ENCODE measurements at regions of chr1 and their contacts with region 1.

Region 1: GRCh38 chr1:226407497-226408284 is at the start of gene PARP1:
- DNase-seq: peak; percentile 98
- H3K4me3 Mint-ChIP-seq: peak within 1 kb of the TSS; percentile 78
- H3K27ac Mint-ChIP-seq: peak within 1 kb of the TSS; percentile 82
- H3K4me1 Mint-ChIP-seq: peaks cover 38% of the 10 kb centered on the region
- H3K27me3 Mint-ChIP-seq: no peaks in the 10 kb centered on the region
- CTCF ChIP-seq: peak; percentile 99
- total RNA-seq, gene PARP1: 192 and 235 TPM in 2 replicates

Region 2: DNA sequence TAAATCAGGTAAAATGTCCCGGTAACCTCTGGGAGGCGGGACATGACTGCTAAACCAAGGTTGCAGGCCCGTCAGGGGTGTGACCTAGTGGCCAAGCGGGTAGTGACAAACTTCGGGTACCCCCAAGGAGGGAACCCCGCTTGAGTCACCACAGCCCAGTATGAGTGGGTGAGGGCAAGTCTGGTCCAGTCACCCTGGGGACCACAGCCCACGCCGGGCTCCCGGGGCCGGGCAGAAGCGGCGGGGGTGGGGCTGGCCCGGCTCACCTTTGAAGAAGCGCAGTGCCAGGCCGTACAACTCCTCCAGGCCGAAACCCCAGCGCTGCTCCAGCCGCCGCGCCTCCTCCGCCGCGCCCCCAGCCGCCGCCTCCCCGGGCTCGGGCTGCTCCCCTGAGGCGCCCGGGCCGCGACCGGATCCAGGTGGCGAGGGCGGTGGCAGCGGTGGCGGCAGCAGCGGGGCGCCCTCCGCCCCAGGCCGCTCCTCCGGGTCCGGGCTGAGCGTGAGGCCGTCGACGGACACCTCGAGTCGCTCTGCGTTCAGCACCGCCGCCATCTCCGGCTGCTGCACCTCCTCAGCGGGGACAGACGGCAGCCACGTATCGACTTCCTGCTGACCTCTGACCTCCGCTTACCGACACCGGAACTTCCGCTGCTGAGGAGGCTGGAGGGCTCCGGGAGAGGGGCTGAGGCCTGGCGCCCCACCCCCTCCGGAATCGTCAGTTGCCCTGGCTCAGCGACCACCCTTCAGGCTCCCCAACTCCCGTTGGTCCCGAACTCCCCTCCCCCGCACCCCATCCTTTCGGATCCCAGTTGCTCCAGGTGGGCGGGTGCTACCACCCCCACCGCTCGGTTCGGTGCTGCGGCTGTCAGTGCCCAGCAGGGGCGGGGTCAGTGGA is 221.3 kb before region 1 on chr1 and contains the start of gene ACBD3:
- CTCF ChIA-PET with region 1: interaction called, 14 read pairs
- POLR2A ChIA-PET with region 1: interaction called, 67 read pairs
- intact Hi-C with region 1: loop called (anchors 2 kb)
- DNase-seq: peak; percentile 91
- H3K4me3 Mint-ChIP-seq: peak within 1 kb of the TSS; percentile 93
- H3K27ac Mint-ChIP-seq: peak within 1 kb of the TSS; percentile 93
- H3K4me1 Mint-ChIP-seq: peaks cover 35% of the 10 kb centered on the region
- H3K27me3 Mint-ChIP-seq: no peaks in the 10 kb centered on the region
- CTCF ChIP-seq: no peak
- total RNA-seq, gene ACBD3: 93.9 and 122 TPM in 2 replicates

Region 3: GRCh38 chr1:226268421-226269116 is 139.1 kb before region 1 on chr1:
- CTCF ChIA-PET with region 1: interaction called, 3 read pairs
- POLR2A ChIA-PET with region 1: interaction called, 11 read pairs
- intact Hi-C with region 1: no loop called
- DNase-seq: peak; percentile 83
- H3K4me3 Mint-ChIP-seq: no peak overlapping the region
- H3K27ac Mint-ChIP-seq: peak overlapping the region; percentile 65
- H3K4me1 Mint-ChIP-seq: peaks cover 26% of the 10 kb centered on the region
- H3K27me3 Mint-ChIP-seq: no peaks in the 10 kb centered on the region
- CTCF ChIP-seq: no peak

Region 4: DNA sequence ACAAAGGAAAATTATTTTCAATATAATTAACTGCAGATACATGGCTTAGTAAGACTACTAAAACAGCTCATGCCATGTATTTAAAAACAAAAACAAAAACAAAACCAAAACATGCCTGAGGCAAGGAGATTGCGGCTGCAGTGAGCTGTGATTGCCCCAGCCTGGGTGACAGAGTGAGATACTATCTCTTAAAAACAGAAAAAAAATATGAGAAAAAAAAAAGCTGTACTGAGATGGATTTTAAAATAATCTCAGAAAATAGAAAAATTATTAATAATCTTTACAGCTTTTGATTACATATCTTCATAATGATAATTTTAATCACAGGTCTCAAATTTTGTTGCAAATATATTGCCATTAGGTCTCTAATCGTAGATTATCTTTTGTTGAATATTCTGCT is 74.7 kb before region 1 on chr1:
- CTCF ChIA-PET with region 1: interaction called, 8 read pairs
- POLR2A ChIA-PET with region 1: interaction called, 15 read pairs
- intact Hi-C with region 1: no loop called
- DNase-seq: no peak
- H3K4me3 Mint-ChIP-seq: peak overlapping the region; percentile 9
- H3K27ac Mint-ChIP-seq: no peak overlapping the region
- H3K4me1 Mint-ChIP-seq: peaks cover 6% of the 10 kb centered on the region
- H3K27me3 Mint-ChIP-seq: no peaks in the 10 kb centered on the region
- CTCF ChIP-seq: no peak

Region 5: DNA sequence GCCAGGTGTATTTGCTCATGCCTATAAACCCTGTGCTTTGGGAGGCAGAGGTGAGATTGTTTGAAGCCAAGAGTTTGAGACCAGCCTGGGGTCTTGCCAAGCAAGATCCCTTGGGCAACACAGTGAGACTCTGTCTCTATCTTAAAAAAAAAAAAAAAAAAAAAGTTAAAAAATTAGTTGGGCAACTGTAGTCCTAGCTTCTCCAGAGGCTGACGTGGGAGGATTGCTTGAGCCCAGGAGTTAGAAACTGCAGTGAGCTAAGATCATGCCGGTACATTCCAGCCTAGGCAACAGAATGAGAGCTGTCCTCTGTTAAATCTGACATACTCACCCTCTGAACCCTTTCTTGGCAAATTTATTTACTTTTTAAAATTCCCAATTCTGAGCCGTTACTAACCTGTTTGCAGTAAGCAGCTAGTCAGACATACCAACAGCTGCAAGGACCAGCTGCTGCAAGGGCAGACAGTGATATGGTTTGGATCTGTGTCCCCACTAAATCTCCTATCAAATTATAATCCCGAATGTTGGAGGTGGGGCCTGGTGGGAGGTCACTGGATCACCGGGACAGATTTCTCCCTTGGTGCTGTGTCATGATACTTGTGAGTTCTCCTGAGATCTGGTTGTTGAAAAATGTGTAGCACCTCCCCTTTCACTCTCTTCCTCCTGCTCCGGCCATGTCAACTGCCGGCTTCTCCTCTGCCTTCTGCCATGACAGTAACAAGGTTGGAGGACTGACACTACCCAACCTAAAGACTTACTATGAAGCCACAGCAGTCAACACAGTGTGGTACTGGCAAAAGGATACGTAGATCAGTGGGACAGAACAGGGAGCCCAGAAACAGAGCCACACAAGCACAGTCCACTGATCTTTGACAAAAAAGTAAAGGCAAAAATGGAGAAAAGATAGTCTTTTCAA is 10.4 kb before region 1 on chr1:
- CTCF ChIA-PET with region 1: interaction called, 17 read pairs
- POLR2A ChIA-PET with region 1: interaction called, 24 read pairs
- intact Hi-C with region 1: no loop called
- DNase-seq: no peak
- H3K4me3 Mint-ChIP-seq: no peak overlapping the region
- H3K27ac Mint-ChIP-seq: no peak overlapping the region
- H3K4me1 Mint-ChIP-seq: no peaks in the 10 kb centered on the region
- H3K27me3 Mint-ChIP-seq: no peaks in the 10 kb centered on the region
- CTCF ChIP-seq: no peak

Region 6: GRCh38 chr1:226603022-226603857 is 195.5 kb after region 1 on chr1:
- CTCF ChIA-PET with region 1: interaction called, 10 read pairs
- POLR2A ChIA-PET with region 1: interaction called, 19 read pairs
- intact Hi-C with region 1: no loop called
- DNase-seq: peak; percentile 91
- H3K4me3 Mint-ChIP-seq: peak overlapping the region; percentile 71
- H3K27ac Mint-ChIP-seq: peak overlapping the region; percentile 97
- H3K4me1 Mint-ChIP-seq: peaks cover 42% of the 10 kb centered on the region
- H3K27me3 Mint-ChIP-seq: peaks cover 8% of the 10 kb centered on the region
- CTCF ChIP-seq: no peak